Heart right ventricle (tissue), 16 donors: ENCODE measurements at regions of chr1 and their contacts with region 1.

Region 1: DNA sequence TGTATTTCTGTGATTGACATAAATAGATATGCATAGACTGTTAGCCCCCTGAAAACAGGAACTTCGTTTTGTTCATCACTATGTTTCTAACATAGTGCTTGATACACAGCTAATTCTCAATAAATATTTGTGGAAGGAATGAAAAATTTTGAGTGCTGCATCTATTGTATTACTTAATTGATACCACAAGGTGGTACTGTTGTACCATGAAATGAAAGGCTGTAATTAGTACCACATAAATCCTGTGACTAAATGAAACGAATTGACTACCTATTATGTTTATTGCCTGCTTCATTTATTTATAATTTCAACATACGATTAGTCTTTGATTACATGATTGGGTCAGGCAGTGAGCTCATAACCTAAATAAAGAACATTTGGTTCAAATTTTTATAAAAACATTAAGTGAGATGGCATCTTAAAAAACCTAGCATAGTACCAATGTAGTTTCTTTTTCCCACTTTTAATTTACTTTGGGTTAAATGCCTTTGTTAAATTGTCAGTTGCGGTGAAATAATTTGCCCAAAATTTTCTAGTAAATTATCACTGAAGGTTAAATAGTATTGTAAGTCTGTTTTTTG is 15.0 kb upstream of the TGFB2 start:
- DNase-seq: no peak
- ATAC-seq: peak in 2 of 8 donors; percentile 37 to 45
- H3K4me3 ChIP-seq: no peak overlapping the region
- H3K27ac ChIP-seq: no peak overlapping the region
- H3K4me1 ChIP-seq: no peaks in the 10 kb centered on the region
- H3K27me3 ChIP-seq: no peaks in the 10 kb centered on the region
- CTCF ChIP-seq: peak; percentile 31 to 86 (median 69)

Region 2: GRCh38 chr1:218521375-218522169 is 191.4 kb after region 1 on chr1:
- intact Hi-C with region 1: loop called in 4 of 10 experiments (anchors 5 to 10 kb)
- DNase-seq: peak in 1 of 2 donors; percentile 45
- ATAC-seq: peak in 4 of 8 donors; percentile 24 to 54 (median 34)
- H3K4me3 ChIP-seq: no peak overlapping the region
- H3K27ac ChIP-seq: no peak overlapping the region
- H3K4me1 ChIP-seq: peaks cover 0 to 5% (median 0%) of the 10 kb centered on the region in 9 donors
- H3K27me3 ChIP-seq: no peaks in the 10 kb centered on the region
- CTCF ChIP-seq: peak; percentile 44 to 74 (median 64)

Region 3: DNA sequence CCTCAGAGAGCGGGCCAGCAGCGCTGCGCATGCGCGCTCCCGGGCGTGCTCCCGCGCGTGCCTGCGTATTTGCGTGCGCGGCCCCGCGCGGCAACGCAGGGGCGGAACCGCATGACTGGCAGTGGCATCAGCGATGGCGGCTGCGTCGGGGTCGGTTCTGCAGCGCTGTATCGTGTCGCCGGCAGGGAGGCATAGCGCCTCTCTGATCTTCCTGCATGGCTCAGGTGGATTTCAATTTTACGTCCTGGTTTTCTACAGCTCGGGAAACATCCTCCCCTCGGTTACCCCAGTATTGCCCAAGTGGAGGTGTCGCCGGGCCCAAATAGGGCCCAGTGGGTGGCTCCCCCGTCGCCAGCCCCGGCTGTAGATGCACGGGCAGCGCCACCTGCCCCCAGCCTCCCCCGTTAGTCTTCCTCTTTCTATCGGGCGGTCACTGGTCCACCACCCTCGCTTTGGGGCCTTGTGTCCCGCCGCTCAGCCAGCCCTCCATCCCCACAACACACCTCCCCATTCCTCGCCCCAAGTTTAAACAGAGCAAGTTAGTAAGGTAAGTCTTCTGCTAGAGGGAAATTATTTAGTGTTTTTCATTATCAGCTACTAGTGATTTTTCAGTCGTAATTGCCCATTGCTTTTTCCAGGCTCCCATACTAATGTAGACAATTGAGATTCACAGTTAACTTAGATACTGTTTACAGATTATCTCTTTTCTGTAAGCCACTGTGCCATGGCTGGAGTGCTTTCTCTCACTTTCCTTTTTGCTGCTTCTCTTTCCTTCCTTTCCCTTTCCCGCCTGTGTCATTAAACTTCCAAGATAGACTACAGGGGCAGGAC is 843.8 kb after region 1 on chr1 and contains the start of gene LYPLAL1:
- intact Hi-C with region 1: loop called in 1 of 10 experiments (anchors 10 kb)
- DNase-seq: peak; percentile 89 to 93
- ATAC-seq: peak; percentile 94 to 98 (median 96)
- H3K4me3 ChIP-seq: peak within 1 kb of the TSS; percentile 63 to 90 (median 78)
- H3K27ac ChIP-seq: peak within 1 kb of the TSS; percentile 72 to 95 (median 92)
- H3K4me1 ChIP-seq: peaks cover 0 to 67% (median 41%) of the 10 kb centered on the region in 9 donors
- H3K27me3 ChIP-seq: no peaks in the 10 kb centered on the region
- CTCF ChIP-seq: peak in 5 of 9 donors; percentile 12 to 42 (median 25)
- total RNA-seq, gene LYPLAL1: 65.9 to 186 (median 120) TPM

Region 4: DNA sequence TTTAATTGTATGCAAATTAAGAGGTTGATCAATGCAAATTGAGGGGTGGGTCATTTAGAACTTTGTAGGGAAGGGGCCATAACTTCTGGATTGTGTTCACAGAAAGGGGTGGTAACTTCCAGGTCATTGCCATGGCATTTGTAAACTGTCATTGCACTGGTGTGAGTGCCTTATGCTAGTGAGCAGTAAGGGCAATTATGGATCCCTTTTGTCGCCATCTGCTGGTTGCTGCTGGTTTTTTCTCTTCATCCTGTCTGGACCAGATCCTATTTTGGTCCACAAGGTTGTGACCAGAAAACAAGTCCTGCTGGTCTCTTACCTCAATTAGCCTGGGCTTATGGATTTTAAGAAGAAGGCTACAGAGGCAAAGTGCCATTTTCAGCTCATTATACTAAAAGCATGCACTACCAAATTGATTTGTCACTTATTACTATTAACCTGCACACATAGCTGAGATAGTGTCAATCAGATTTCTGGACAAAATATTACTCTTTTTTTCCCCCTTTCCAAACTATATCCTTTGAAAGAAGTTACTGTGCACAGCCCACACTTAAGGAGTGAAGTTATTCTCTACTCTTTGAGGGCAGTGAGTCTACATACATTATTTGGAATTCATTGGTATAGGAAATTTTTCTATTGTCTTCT is 1086.6 kb after region 1 on chr1:
- intact Hi-C with region 1: loop called in 5 of 10 experiments (anchors 5 to 10 kb)
- DNase-seq: peak in 1 of 2 donors; percentile 56
- ATAC-seq: peak in 5 of 8 donors; percentile 53 to 62 (median 57)
- H3K4me3 ChIP-seq: no peak overlapping the region
- H3K27ac ChIP-seq: peak overlapping the region in 1 of 10 donors; percentile 1
- H3K4me1 ChIP-seq: peaks cover 0 to 27% (median 14%) of the 10 kb centered on the region in 9 donors
- H3K27me3 ChIP-seq: no peaks in the 10 kb centered on the region
- CTCF ChIP-seq: peak in 8 of 9 donors; percentile 51 to 75 (median 62)

Region 5: GRCh38 chr1:219812491-219813203 is 1482.5 kb after region 1 on chr1:
- intact Hi-C with region 1: loop called in 9 of 10 experiments (anchors 5 to 10 kb)
- DNase-seq: peak in 1 of 2 donors; percentile 21
- ATAC-seq: peak in 7 of 8 donors; percentile 70 to 83 (median 80)
- H3K4me3 ChIP-seq: no peak overlapping the region
- H3K27ac ChIP-seq: no peak overlapping the region
- H3K4me1 ChIP-seq: peaks cover 0 to 11% (median 4%) of the 10 kb centered on the region in 9 donors
- H3K27me3 ChIP-seq: peaks cover 0 to 10% (median 0%) of the 10 kb centered on the region in 7 donors
- CTCF ChIP-seq: peak; percentile 58 to 88 (median 79)